ENCODE measurements at regions of chr13 and their contacts with region 1.

Region 1: DNA sequence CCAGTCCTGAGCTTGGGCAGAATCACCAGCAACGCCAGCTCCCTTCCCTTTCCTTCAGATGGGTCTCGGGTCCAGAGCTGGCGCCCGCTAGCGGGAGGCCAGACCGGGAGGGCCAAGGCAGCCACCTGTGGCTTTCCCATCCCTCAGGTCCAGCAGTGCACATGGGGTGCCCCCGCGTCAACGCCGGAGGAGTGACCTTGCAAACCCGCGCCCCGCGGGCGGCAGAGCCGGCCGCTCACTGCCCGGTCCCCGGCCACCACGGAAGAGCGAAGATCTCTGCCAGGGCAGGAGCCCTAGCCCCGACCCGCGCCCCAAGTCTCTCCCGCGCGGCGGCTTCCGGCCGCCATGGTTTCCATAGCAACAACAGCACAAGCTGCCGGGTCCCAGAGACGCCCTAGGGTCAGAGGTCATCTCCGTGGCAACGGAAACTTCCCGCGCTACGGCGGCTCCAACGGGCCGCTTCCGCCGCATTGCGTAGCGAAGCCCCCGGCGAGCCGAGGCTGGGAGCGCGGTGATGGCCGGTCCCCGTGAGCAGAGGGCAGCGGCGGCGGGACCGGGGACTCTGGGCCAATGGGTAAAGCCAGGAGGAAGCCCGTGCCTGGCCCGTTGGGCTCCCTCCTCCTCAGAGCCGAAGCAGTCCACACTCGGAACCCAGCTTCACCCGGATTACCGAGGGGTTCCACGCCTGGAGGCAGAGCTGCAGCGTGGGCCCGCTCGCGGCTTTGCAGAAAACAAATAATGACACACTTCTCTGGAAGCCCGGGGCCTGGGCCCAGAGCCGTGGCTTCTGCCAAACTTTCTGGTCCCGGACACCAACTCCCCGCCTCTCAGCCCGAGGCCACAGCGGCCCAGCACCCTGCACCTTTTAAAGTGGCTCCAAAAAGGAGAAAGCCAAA is 7.4 kb downstream of the FGF14 start:
- DNase-seq: peak; percentile 93 to 98 (median 96)
- ATAC-seq: peak; percentile 94
- H3K4me3 ChIP-seq: peak overlapping the region; percentile 80
- H3K4me3 Mint-ChIP-seq: peak overlapping the region; percentile 95
- H3K27ac ChIP-seq: peak overlapping the region in 1 of 2 donors; percentile 50
- H3K27ac Mint-ChIP-seq: peak overlapping the region; percentile 77
- H3K4me1 ChIP-seq: peaks cover 18% of the 10 kb centered on the region
- H3K4me1 Mint-ChIP-seq: peaks cover 19% of the 10 kb centered on the region
- H3K27me3 ChIP-seq: peaks cover 3 to 6% of the 10 kb centered on the region in 2 experiments
- H3K27me3 Mint-ChIP-seq: peaks cover 20% of the 10 kb centered on the region
- CTCF ChIP-seq: no peak

Region 2: DNA sequence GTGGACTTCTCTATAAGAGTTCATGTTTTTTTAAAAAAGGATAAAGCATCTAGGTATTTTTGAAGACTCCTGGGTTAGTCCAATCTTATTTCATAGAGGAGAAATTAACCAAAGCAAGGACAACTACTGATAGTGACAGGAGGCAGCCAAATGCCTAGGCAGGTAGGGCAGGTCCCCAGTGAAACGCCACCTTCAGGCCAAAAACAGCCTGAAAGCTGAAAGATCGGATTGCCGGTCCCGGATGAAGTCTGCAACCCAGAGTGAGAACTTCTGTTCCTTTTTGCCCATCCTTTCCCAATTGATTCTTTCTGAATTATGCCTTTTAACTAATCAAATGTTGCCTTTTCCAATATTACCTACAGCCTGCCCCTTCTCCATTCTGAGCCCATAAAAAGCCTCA is 1799.7 kb before region 1 on chr13:
- CTCF ChIA-PET with region 1: no interaction called
- POLR2A ChIA-PET with region 1: no interaction called
- intact Hi-C with region 1: loop called in 1 of 2 experiments (anchors 10 kb)
- DNase-seq: peak in 2 of 14 experiments; percentile 9 to 27
- ATAC-seq: no peak
- H3K4me3 ChIP-seq: no peak overlapping the region
- H3K4me3 Mint-ChIP-seq: no peak overlapping the region
- H3K27ac ChIP-seq: no peak overlapping the region
- H3K27ac Mint-ChIP-seq: no peak overlapping the region
- H3K4me1 ChIP-seq: no peaks in the 10 kb centered on the region
- H3K4me1 Mint-ChIP-seq: no peaks in the 10 kb centered on the region
- H3K27me3 ChIP-seq: no peaks in the 10 kb centered on the region
- H3K27me3 Mint-ChIP-seq: peaks cover 5% of the 10 kb centered on the region
- CTCF ChIP-seq: peak; percentile 17

Region 3: GRCh38 chr13:102422690-102423089 is 28.3 kb after region 1 on chr13:
- CTCF ChIA-PET with region 1: no interaction called
- POLR2A ChIA-PET with region 1: no interaction called
- intact Hi-C with region 1: no loop called
- DNase-seq: no peak
- ATAC-seq: no peak
- H3K4me3 ChIP-seq: no peak overlapping the region
- H3K4me3 Mint-ChIP-seq: no peak overlapping the region
- H3K27ac ChIP-seq: no peak overlapping the region
- H3K27ac Mint-ChIP-seq: no peak overlapping the region
- H3K4me1 ChIP-seq: no peaks in the 10 kb centered on the region
- H3K4me1 Mint-ChIP-seq: no peaks in the 10 kb centered on the region
- H3K27me3 ChIP-seq: no peaks in the 10 kb centered on the region
- H3K27me3 Mint-ChIP-seq: peaks cover 13% of the 10 kb centered on the region
- CTCF ChIP-seq: no peak

Region 4: DNA sequence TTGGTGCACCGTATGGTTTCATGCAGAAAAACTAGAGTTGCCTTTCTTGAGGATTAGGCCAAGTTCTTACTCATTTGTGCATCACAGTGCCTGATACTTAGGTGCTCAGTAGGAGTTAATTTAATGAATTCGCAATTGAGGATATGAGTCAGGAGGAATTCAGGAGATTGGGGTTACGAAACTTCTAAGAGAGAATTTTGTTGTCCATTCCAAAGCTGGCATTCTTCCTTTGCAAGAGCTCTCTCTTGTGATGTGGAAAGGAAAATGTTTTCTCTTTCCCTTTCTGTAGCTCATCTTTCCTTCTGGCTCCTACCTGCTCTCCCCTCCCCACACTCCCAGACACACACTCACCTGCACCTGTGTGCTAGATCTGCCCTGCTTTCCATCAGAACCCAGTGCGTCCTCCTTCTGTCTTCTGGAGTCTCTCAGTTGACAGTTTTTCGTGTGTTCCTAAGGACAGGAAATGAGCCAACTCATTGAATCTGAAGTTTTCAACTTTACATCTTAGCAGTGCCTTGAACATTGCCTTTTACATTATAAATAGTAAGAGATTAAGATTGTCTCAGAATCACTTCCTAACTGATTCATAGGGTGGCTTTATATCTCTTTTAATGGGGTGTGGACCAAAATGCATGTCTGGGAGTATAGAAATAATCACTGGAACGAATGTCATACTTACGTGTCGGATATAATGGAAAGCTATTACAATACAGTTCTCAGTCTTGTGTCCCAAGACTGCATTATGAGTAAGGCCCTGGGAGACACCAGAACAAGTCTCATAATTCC is 431.7 kb after region 1 on chr13:
- CTCF ChIA-PET with region 1: no interaction called
- POLR2A ChIA-PET with region 1: no interaction called
- intact Hi-C with region 1: no loop called
- DNase-seq: no peak
- ATAC-seq: no peak
- H3K4me3 ChIP-seq: no peak overlapping the region
- H3K4me3 Mint-ChIP-seq: no peak overlapping the region
- H3K27ac ChIP-seq: no peak overlapping the region
- H3K27ac Mint-ChIP-seq: no peak overlapping the region
- H3K4me1 ChIP-seq: no peaks in the 10 kb centered on the region
- H3K4me1 Mint-ChIP-seq: no peaks in the 10 kb centered on the region
- H3K27me3 ChIP-seq: no peaks in the 10 kb centered on the region
- H3K27me3 Mint-ChIP-seq: no peaks in the 10 kb centered on the region
- CTCF ChIP-seq: no peak

Measured in CD4-positive, alpha-beta T cell (primary cell).